Sigmoid colon (tissue), 7 donors: ENCODE measurements at regions of chr4 and their contacts with region 1.

Region 1: DNA sequence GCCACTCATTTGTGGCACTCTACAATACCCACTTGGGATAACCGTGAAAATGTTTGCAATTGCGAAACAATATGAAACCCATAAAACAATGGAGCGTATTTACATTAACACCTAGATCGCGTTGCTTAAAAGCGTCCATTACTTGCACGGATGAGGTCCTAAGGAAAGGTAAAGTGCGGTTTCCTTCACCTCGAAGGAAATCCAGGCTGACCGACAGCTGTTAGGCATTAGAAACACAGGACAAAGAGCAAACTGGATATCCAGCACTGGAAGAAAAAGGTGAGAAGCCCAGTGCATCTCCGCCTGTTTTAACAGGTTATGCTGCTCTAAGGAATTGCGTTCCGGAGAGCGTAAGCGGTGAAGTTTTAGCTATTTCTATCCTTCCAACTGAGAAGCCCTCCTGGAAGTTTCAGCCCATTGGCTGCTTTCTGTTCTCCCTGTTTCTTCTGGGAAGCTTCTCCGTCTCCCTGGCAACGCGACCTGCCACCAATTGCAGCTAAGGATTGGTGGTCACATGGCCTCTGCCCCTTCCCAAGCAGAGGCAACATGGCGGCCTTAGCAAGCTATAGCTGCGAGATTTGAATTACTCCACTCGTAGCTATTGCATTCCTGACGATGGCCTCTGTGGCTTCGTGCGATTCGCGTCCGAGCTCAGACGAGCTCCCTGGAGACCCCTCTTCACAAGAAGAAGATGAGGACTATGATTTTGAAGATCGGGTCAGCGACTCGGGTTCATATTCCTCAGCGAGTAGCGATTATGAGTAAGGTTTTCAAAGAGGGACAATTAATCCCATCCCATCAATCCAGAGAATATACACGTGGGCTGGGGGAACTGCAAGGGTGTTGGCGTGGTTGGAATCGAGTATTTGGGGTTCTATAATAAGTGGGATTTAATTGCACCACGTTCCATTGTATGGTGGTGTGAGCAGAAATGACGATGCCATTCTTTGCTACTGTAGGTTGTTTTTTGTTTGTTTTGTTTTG is at the start of gene INTU:
- DNase-seq: peak; percentile 97
- H3K4me3 ChIP-seq: peak within 1 kb of the TSS; percentile 52 to 68 (median 66)
- H3K27ac ChIP-seq: peak within 1 kb of the TSS; percentile 58 to 74 (median 72)
- H3K4me1 ChIP-seq: peaks cover 0 to 16% (median 8%) of the 10 kb centered on the region in 4 donors
- H3K27me3 ChIP-seq: peaks cover 0 to 4% (median 0%) of the 10 kb centered on the region in 3 donors
- CTCF ChIP-seq: no peak
- EP300 ChIP-seq: no peak
- POLR2A ChIP-seq: no peak
- total RNA-seq, gene INTU: 7.6 to 10.0 (median 9.5) TPM

Region 2: DNA sequence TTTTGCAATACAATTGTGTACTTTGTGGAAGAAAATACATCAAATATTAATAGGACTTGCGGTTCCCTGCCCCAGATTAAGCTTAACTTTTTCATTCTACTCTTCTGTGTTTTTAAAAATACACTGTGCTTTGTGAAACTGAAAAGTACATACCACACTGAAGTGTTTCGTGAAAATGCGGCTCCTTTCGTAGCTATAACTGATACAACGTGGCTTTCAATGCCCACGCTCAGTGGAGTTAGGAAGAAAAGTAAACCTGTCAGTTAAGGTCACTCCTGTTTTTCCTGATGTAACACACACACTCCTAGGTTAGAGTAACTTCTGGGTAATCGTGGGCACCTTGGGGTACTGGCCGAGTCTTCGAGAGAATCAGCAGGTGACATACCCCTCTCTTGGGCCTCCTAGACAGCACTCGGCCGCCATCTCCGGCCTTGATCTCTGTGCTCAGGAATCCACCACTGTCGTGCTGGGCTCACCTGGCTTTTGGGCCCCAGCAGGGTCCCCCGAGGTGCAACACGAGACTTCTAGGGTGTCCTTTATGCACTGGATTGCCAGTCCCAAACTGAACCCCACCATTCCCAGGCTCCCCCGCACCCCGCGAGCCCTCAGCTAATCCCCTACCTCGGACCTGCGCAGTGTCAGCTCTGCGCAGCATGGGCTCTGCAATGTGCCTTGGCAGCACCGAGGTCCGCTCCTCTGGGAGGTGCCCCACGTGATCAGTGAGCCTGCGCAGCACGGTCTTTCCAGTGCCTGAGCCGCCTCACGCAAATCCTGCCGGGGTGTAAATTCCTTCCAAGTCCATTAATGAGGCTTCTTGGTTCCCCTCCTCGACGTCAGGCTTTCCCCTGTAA is 162.5 kb before region 1 on chr4:
- intact Hi-C with region 1: no loop called
- DNase-seq: no peak
- H3K4me3 ChIP-seq: no peak overlapping the region
- H3K27ac ChIP-seq: no peak overlapping the region
- H3K4me1 ChIP-seq: no peaks in the 10 kb centered on the region
- H3K27me3 ChIP-seq: no peaks in the 10 kb centered on the region
- CTCF ChIP-seq: no peak
- EP300 ChIP-seq: no peak
- POLR2A ChIP-seq: no peak

Region 3: DNA sequence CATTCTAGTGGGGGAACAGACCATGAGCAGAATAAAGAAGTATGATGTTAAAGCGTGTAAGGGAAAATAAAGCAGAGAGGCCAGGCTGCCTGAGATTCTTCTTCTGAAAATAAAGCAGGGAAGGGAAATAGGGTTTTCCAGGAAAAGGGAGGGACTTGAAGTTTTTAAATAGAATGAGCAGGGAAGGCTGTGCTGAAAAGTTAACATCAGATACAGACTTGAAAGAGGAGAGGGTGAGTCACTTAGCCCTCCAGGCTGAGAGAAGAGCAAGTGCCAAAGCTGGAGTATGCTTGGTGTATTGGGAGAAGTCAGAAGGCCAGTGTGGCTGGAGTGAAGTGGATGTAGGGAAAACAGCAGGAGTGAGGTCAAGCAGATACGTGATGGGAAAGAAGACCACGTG is 238.0 kb after region 1 on chr4:
- intact Hi-C with region 1: loop called (anchors 10 kb)
- DNase-seq: no peak
- H3K4me3 ChIP-seq: no peak overlapping the region
- H3K27ac ChIP-seq: peak overlapping the region in 1 of 4 donors; percentile 10
- H3K4me1 ChIP-seq: peaks cover 0 to 13% (median 4%) of the 10 kb centered on the region in 4 donors
- H3K27me3 ChIP-seq: no peaks in the 10 kb centered on the region
- CTCF ChIP-seq: no peak
- EP300 ChIP-seq: no peak
- POLR2A ChIP-seq: no peak